Head of caudate nucleus (tissue), 42 donors: ENCODE measurements at regions of chr1 and their contacts with region 1.

Region 1: DNA sequence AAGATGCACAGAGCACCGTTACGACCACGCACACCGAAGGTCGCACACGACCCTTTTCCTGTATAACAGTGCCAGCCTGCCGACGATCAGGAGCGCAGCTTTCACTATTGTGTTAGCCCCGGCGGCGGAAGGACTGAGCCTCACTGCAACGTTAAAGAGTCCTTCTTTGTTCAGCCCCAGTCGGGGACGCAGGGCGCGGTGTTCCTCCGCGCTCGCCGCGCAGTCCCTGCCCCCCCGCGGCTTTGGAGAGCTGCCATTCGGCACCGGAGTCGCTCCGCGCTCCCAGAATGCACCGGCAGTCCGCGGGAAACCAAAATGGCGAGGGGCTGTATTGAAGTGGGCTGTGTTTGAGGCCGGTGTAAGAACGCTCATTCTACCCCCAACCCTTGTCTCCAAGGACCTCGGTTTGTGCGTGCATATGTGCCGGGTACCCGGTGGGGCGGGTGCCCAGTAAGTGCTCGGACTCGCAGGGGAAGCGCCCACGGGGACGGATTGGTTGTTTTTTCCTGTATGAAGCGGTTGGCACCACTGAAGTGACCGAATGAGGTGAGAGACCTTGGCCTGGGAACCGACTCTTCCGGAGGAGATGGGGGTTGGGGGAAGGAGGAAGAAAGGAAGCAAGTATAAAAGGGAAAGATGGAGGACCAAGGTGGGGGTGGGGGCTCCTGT is at the start of gene MTF2:
- DNase-seq: peak; percentile 89 to 98 (median 96)

Region 2: GRCh38 chr1:92960395-92961130 is 118.6 kb before region 1 on chr1:
- intact Hi-C with region 1: loop called (anchors 5 kb)
- DNase-seq: peak; percentile 45 to 91 (median 80)

Region 3: DNA sequence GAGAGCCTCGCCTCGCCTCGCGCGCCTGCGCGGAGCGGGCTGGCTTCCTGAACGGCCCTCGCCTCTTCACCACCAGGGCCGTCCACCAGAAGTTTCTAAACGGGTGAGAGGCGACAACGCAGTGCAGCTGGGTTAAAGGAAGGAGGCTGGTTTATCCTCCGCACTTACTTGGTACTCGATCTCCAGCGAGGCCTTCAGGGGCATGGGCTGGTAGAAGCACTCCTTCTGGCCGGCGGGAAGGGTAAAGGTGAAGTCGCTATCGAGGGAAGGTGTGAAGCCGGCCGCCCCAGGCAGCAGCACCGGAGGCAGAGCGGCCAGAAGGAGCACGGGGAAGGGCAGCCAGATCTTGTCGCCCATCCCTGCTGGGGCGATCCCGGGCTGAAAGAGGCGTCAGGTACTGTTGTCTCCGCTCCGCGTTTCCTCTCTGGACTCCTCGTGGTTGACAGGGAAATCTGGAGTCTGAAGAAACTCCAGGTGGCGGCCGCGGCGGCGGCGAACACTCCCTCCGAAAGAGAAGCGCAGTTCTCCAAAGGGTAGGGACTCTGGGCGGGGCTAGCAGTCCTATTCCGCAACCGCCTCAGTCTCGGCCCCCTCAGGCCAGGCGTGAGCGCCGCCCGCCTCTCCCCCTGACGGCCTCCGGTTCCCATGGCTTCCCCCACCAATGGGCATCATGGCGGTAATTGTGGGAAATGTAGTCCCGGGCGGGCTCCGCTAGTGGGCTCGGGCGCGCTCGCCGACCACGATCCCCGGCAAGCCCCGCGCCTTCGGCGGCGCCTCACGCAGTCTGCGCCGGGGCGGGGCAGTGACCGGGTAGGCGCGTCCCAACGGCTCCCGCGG is 101.0 kb after region 1 on chr1 and contains the start of gene TMED5:
- intact Hi-C with region 1: loop called (anchors 10 kb)
- DNase-seq: peak; percentile 90 to 99 (median 98)

Region 4: GRCh38 chr1:93345633-93346420 is 266.7 kb after region 1 on chr1 and contains the start of gene DR1:
- intact Hi-C with region 1: loop called (anchors 10 kb)
- DNase-seq: peak; percentile 81 to 98 (median 95)